ENCODE measurements at regions of chr10 and their contacts with region 1.

Region 1: DNA sequence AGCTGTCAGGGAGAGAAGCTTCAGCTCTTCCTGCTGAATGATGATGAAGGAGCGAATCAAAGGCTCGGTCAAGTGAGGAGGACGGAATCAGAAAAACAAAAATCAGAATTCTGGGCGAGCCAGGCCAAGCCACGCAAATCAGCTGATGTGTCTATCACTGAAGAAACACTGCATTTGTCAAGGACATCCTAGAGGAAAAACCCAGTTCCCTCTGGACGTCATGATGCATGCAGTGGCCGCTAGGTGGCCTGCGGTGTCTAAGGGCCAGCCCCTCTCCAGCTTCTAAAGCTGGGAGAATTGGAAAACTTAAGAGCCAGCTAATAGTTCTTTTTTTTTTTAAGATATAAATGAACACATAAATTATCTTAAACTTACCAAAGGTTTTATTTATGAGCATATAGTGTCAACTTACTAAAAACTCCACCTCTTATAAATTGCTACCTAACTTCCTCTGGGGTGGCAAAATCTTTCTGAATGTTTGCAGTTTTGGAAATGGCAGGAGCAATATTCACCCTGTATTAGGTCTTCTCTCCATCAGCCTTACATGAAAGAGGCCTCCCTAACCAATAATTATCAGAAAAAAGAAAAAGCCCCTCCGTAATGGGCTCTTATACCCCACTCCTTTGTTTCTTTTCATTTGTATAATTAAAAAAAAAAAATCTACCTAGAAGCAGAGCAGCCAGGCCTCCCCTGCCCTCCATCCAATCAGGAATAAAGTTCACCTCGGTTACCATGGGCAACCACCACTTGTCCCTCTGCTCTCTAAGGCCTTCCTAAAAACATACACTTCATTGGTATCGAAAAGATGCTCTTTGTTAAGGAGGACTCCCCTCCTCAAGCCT is 186.8 kb downstream of the USP6NL start:
- DNase-seq: peak in 9 of 10 donors; percentile 23 to 91 (median 51)

Region 2: DNA sequence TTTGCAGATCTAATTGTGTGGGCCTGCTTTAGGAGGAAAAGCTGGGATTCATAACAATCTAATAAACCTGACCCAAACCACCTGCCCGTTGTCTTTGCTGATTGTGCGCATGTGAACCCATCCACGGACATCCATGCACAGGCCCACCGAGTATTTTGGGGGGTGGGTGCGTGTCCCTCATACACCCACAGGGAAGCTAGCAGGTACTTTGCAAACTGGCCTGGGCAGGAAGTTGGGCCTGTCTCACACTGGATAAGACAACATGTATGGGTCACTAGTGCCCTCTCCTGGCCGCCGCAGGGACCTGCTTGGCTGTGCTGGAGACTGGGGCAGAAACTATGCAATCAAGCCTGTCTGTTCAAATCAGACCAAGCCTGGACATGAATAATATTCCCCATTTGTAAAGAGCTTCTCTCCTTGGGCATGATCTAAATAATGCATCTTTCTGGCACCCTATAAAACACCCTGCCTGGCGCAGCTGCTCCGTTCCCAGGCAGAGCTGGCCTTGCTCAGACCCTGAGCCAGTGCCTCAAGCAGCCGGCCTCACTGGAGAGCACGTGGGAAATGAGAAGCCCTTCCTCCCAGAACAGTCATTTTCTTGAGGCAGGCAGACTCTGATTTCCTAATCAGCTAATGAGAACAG is 333.3 kb after region 1 on chr10:
- intact Hi-C with region 1: loop called (anchors 10 kb)
- DNase-seq: peak; percentile 69 to 98 (median 89)